ENCODE measurements at regions of chr10 and their contacts with region 1.

Region 1: DNA sequence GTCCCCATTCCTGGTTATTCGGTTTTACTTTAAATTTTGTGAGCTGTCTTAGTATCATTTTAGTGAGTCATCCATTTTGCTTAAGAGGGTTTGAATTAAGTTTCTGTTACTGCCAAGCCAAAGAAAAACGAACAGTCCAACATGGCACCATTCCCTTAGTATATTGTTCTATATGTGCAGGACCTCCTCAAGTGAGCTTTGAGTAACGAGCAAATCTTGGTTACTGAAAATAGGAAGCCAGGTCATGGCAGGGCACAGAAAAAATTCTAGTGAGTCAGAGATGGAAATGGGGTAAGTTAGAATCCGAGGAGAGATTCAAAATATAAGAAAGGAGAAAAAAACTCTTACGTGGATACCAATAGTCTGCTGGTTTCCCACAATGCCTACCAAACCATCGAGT is 292.9 kb downstream of the BAMBI start:
- DNase-seq: no peak

Region 2: DNA sequence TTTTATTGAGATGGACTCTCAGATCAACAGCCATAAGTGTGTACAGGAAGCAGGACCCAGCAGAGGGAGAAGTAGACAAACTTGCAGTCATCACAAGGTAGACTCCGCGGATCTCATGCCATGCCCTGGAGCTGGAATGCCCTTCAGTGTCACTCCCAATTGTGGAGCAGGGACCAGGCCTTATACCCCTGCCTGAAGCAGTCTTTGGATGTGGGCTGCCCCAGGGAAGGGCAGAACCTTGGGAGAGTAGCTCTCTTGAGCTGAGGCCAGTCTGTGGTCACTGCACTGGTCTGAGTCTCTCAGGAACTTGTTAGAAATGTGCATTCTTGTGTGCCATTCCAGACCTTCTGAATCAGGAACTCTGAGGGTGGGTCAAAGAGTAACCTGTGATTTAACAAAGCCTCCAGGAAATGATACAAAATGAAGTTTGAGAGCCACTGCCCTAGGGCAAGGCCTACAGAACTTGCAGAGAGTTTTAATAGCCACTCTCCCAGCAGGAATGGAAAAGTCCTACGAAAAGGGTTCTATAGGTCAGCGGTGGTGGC is 386.6 kb after region 1 on chr10:
- intact Hi-C with region 1: no loop called
- DNase-seq: no peak

Region 3: GRCh38 chr10:29415876-29416275 is 445.6 kb after region 1 on chr10:
- intact Hi-C with region 1: loop called in 1 of 2 experiments (anchors 5 kb)
- DNase-seq: no peak